IMR-90 (cell line): ENCODE measurements at regions of chr21 and their contacts with region 1.

Region 1: DNA sequence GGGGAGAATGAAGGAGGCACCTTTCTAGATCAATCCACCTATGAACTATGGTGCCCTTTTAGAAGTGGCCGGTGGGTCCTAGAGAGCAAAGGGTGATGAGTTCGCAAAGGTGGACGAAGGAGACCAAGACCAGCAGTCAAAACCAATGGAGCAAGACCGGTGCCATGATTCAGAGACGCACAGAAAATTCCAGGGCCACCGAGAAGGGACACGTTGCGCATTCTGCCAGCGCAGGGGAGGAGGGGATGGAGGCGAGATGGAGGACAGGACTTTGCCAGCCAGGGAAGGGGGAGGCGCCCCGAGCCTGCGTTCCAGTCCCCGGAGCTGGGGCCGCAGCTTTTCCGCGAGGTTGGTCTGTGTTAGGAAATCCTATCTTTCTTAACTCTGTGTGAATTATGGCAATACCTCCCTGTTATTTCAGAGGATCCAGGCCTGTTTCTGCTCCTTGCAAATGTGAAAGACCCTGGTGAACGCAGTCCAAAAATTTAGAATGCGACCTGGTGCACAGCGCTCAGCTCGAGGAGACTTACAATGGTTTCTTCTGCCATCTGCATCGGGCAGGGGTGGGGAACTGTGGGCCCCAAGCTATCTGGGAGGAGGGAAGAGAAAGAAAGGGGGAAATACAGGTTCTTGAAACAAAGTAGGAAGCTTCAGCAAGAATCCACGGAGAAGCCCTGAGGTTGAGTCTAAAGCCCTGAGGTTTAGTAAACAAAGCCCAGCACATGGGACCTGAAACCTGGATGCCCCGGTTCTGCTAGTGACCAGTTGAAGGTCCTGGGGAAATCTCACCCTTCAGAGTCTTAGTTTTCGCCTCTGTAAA is 129.4 kb downstream of the MRPS6 start:
- DNase-seq: no peak
- ATAC-seq: no peak
- H3K4me3 ChIP-seq: no peak overlapping the region
- H3K27ac ChIP-seq: no peak overlapping the region
- H3K4me1 ChIP-seq: peaks cover 15% of the 10 kb centered on the region
- H3K27me3 ChIP-seq: no peaks in the 10 kb centered on the region; the same call in 1 of the 2 replicates
- CTCF ChIP-seq: no peak
- POLR2A ChIP-seq: no peak
- RAD21 ChIP-seq: no peak

Region 2: GRCh38 chr21:34073032-34073869 is 129.5 kb before region 1 on chr21 and contains the starts of genes MRPS6 and SLC5A3:
- CTCF ChIA-PET with region 1: no interaction called
- POLR2A ChIA-PET with region 1: no interaction called
- dilution Hi-C with region 1: no loop called
- in situ Hi-C with region 1: no loop called
- intact Hi-C with region 1: loop called (anchors 5 kb)
- DNase-seq: peak; percentile 81
- ATAC-seq: peak; percentile 88
- H3K4me3 ChIP-seq: peak within 1 kb of the TSS; percentile 100
- H3K27ac ChIP-seq: peak within 1 kb of the TSS; percentile 87
- H3K4me1 ChIP-seq: peaks cover 3% of the 10 kb centered on the region; the same call in 1 of the 2 replicates
- H3K27me3 ChIP-seq: peaks cover 5% of the 10 kb centered on the region; the same call in 1 of the 2 replicates
- CTCF ChIP-seq: peak; percentile 26; the same call in 1 of the 2 replicates
- POLR2A ChIP-seq: peak; percentile 89
- RAD21 ChIP-seq: 0 out of 2 replicates have a peak, but pooled peaks have one; percentile 7
- total RNA-seq, gene MRPS6: 7.5 and 11.9 TPM in 2 replicates
- total RNA-seq, gene SLC5A3: 9.9 and 15.6 TPM in 2 replicates

Region 3: GRCh38 chr21:34092262-34092921 is 110.4 kb before region 1 on chr21:
- CTCF ChIA-PET with region 1: no interaction called
- POLR2A ChIA-PET with region 1: no interaction called
- dilution Hi-C with region 1: no loop called
- in situ Hi-C with region 1: no loop called
- intact Hi-C with region 1: no loop called
- DNase-seq: no peak
- ATAC-seq: no peak
- H3K4me3 ChIP-seq: no peak overlapping the region
- H3K27ac ChIP-seq: no peak overlapping the region
- H3K4me1 ChIP-seq: peaks cover 10% of the 10 kb centered on the region
- H3K27me3 ChIP-seq: no peaks in the 10 kb centered on the region
- CTCF ChIP-seq: no peak
- POLR2A ChIP-seq: no peak
- RAD21 ChIP-seq: no peak

Region 4: DNA sequence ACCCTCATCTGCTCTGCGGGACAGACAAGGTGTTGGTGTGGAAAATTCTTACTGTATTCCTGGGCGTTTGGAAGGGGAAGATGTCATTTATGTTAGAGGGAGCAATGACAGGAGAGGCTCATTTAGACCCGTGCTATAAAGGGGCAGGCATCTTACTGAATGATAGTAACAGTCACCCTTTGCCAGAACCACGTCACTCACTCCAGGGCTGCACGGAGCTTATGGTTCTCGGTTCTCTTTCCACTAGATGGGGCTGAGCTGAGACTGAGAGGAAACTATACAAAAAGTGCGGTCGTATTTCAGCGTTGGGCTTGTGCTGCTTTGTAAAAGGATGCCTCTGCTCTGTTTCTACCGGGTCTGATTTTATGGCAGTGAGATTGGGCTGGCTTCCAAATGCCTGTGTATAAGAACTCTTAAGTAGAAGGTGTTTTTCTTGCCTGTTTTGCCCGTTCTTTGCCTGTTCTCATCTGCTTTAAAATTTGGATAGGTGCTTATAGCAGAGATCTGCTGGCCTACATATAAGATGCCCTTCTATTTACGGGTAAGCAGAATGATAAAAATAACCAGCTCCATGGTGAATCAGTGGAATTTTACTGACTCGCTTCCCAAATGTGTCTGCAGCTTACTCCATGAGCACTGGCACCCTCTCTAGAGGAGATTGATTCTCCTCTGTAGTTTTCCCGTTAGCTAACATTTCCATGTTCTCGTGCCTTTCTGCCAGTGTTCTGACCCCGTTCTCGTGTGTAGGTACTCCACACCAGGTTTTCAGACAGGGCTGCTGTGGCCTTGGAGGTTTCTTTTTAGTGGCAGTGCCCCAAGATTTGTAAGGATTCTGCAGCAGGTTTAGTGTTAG is 73.5 kb before region 1 on chr21:
- CTCF ChIA-PET with region 1: interaction called, 4 read pairs
- POLR2A ChIA-PET with region 1: no interaction called
- dilution Hi-C with region 1: no loop called
- in situ Hi-C with region 1: no loop called
- intact Hi-C with region 1: loop called (anchors 5 kb)
- DNase-seq: peak; percentile 92
- ATAC-seq: peak; percentile 92
- H3K4me3 ChIP-seq: peak overlapping the region; percentile 20; the same call in 1 of the 2 replicates
- H3K27ac ChIP-seq: peak overlapping the region; percentile 90
- H3K4me1 ChIP-seq: peaks cover 30% of the 10 kb centered on the region
- H3K27me3 ChIP-seq: no peaks in the 10 kb centered on the region
- CTCF ChIP-seq: peak; percentile 63
- POLR2A ChIP-seq: no peak
- RAD21 ChIP-seq: peak; percentile 51

Region 5: DNA sequence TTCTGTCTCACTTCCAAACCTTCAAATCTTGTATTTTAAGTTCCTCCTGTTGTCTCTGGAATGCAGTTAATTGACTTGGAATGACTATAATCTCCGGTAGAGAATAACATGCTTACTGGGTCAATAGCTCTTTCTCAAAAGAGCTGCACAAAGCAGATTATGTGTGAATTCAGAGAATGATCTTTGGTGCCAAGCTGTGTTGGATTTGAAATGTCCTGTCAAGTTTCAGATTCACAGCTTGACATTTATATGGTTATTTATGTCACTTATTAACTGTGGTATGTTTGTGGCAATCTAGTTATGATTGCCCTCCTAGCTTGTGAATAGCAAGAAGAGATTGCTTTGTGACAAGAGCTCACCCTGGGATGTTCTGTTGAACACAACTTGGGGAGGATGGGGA is 32.8 kb after region 1 on chr21:
- CTCF ChIA-PET with region 1: no interaction called
- POLR2A ChIA-PET with region 1: no interaction called
- dilution Hi-C with region 1: no loop called
- in situ Hi-C with region 1: no loop called
- intact Hi-C with region 1: no loop called
- DNase-seq: no peak
- ATAC-seq: no peak
- H3K4me3 ChIP-seq: no peak overlapping the region
- H3K27ac ChIP-seq: no peak overlapping the region
- H3K4me1 ChIP-seq: no peaks in the 10 kb centered on the region
- H3K27me3 ChIP-seq: peaks cover 24% of the 10 kb centered on the region
- CTCF ChIP-seq: no peak
- POLR2A ChIP-seq: no peak
- RAD21 ChIP-seq: no peak

Region 6: GRCh38 chr21:34320011-34320410 is 117.2 kb after region 1 on chr21:
- CTCF ChIA-PET with region 1: no interaction called
- POLR2A ChIA-PET with region 1: interaction called, 13 read pairs
- dilution Hi-C with region 1: no loop called
- in situ Hi-C with region 1: no loop called
- intact Hi-C with region 1: no loop called
- DNase-seq: no peak
- ATAC-seq: no peak
- H3K4me3 ChIP-seq: no peak overlapping the region
- H3K27ac ChIP-seq: no peak overlapping the region
- H3K4me1 ChIP-seq: no peaks in the 10 kb centered on the region
- H3K27me3 ChIP-seq: peaks cover 42% of the 10 kb centered on the region
- CTCF ChIP-seq: no peak
- POLR2A ChIP-seq: no peak
- RAD21 ChIP-seq: no peak

Region 7: DNA sequence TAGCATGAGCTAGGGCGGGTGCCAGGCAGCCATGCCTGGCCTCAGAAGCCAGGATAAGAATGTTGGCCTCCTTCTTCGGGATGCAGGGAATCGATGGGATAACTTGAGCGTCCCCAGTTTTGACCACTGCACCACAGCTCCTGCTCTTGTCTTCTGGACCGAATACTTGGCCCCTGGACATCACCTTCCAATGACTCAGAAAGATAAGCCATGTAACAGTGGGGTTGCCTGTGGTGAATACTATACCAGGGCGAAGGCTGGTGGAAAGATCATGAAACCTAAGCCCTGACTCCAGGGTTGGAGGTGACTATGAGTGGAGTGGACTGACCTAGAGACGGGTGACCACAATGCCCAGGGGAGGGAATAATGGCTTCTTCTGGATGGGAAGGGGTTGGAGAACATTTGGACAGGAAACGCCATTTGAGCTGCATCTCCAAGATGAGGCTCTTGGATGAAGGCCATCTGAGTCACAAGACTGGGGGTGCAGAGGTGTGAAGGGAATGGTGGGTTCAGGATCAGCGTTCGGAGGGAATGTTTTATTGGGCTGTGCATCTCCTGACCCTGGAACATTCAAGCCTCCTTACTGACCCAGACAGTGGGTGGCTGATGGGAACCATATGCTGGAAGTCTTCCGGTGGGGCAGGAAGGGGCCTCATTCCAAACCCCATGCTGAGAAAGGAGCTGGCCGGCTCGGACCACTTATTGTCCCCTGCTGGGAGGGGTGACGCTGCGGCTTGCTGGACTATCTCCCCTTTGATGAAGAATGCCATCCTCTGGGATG is 142.5 kb after region 1 on chr21:
- CTCF ChIA-PET with region 1: interaction called, 3 read pairs
- POLR2A ChIA-PET with region 1: no interaction called
- dilution Hi-C with region 1: no loop called
- in situ Hi-C with region 1: no loop called
- intact Hi-C with region 1: loop called (anchors 5 kb)
- DNase-seq: peak; percentile 60
- ATAC-seq: peak; percentile 52
- H3K4me3 ChIP-seq: no peak overlapping the region
- H3K27ac ChIP-seq: peak overlapping the region; percentile 59
- H3K4me1 ChIP-seq: peaks cover 22% of the 10 kb centered on the region
- H3K27me3 ChIP-seq: peaks cover 2% of the 10 kb centered on the region; the same call in 1 of the 2 replicates
- CTCF ChIP-seq: no peak
- POLR2A ChIP-seq: no peak
- RAD21 ChIP-seq: no peak